Activated CD4-positive, alpha-beta T cell treated with anti-CD3 and anti-CD28 coated beads for 36 hours (primary cell): ENCODE measurements at regions of chr7 and their contacts with region 1.

Region 1: DNA sequence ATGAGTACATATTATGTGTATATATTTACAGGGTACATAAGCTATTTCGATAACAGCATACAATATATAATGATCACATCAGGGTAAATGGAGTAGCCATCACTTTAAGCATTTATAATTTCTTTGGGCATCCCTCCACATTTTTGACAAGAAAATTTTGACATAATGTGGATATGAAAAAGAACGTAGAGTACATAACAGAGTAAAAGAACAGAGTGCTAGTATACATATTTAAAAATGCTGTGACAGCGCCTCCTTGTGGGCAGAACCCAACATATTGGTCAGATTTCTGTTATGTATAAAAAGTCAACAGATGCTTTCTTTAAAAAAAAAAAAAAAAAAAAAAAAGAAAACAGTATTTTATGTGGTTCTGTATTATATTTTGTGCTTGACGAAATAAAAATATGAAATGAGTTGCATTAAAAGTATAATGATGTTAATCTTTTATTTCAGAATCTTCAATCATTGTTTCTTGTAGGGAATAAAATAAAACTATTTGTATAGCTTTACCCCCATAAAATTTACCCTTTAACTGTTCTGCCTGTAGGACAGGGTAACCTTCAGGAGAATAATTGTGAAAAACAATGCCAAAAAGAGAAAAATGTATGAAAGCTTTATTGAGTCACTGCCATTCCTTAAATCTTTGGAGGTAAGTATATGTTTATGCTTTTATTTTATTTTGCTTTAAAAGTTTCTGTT is 18.3 kb upstream of the HBP1 start:
- DNase-seq: peak; percentile 86
- ATAC-seq: peak; percentile 83
- H3K4me3 Mint-ChIP-seq: no peak overlapping the region
- H3K27ac Mint-ChIP-seq: no peak overlapping the region
- H3K4me1 Mint-ChIP-seq: peaks cover 4% of the 10 kb centered on the region
- H3K27me3 Mint-ChIP-seq: no peaks in the 10 kb centered on the region

Region 2: GRCh38 chr7:106542550-106543220 is 607.8 kb before region 1 on chr7:
- CTCF ChIA-PET with region 1: interaction called, 3 read pairs
- POLR2A ChIA-PET with region 1: no interaction called
- intact Hi-C with region 1: loop called in 1 of 2 experiments (anchors 2 kb)
- DNase-seq: peak; percentile 70
- ATAC-seq: peak; percentile 91
- H3K4me3 Mint-ChIP-seq: no peak overlapping the region
- H3K27ac Mint-ChIP-seq: peak overlapping the region; percentile 4
- H3K4me1 Mint-ChIP-seq: peaks cover 8% of the 10 kb centered on the region
- H3K27me3 Mint-ChIP-seq: peaks cover 3% of the 10 kb centered on the region

Region 3: DNA sequence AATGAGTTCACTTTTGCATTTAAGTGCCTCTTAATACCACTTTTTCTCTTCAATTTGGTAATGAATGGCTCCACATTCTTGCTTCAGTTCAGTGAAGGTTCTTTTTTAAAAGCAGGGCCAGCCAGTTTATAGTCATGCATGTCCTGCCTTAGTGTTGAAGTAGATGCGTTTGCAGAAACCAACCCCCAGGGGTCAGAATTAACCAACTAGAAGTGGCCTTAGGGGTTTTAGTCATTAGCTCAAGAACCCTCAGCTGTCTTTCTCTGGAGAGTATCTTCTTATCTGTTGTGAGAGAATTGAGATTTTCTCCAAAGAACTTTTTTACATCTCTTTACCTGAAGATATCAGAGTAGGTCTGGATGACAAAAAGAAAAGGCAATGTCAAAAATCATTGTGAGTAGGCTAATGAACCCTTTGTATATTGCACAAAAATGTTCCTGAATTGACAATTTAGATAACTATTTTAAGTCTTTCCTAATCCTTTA is 203.2 kb before region 1 on chr7:
- CTCF ChIA-PET with region 1: interaction called, 31 read pairs
- POLR2A ChIA-PET with region 1: no interaction called
- intact Hi-C with region 1: loop called (anchors 1 kb)
- DNase-seq: peak; percentile 49
- ATAC-seq: peak; percentile 51
- H3K4me3 Mint-ChIP-seq: no peak overlapping the region
- H3K27ac Mint-ChIP-seq: no peak overlapping the region
- H3K4me1 Mint-ChIP-seq: no peaks in the 10 kb centered on the region
- H3K27me3 Mint-ChIP-seq: no peaks in the 10 kb centered on the region

Region 4: GRCh38 chr7:107138696-107139420 is 11.7 kb before region 1 on chr7:
- CTCF ChIA-PET with region 1: interaction called, 52 read pairs
- POLR2A ChIA-PET with region 1: no interaction called
- intact Hi-C with region 1: no loop called
- DNase-seq: no peak
- ATAC-seq: no peak
- H3K4me3 Mint-ChIP-seq: no peak overlapping the region
- H3K27ac Mint-ChIP-seq: no peak overlapping the region
- H3K4me1 Mint-ChIP-seq: no peaks in the 10 kb centered on the region
- H3K27me3 Mint-ChIP-seq: peaks cover 3% of the 10 kb centered on the region

Region 5: DNA sequence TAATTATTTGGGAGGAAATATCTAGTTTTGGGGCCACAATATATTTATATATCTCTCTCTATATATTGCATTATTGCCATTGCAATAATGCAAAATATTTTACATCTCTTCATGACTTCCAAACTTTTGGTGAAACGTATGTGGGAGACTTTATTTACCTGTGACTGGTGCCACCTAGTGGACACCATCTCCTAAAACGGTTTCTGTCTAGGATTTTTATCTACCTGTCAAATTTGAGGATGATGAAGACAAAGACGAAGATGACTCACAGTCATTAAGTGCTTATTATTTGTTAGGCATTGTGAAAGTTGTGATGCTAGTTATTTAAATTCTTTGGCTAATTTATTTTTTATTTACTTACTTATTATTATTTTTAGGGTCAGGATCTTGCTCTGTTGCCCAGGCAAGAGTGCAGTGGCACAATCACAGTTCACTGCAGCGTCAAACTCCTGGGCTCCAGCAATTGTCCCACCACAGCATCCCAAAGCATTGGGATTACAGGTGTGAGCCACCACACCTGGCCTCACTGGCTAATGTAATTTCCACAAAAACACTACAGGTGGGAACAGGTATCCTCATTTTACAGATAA is 574.7 kb after region 1 on chr7:
- CTCF ChIA-PET with region 1: interaction called, 3 read pairs
- POLR2A ChIA-PET with region 1: no interaction called
- intact Hi-C with region 1: loop called in 1 of 2 experiments (anchors 1 kb)
- DNase-seq: peak; percentile 67
- ATAC-seq: peak; percentile 51
- H3K4me3 Mint-ChIP-seq: no peak overlapping the region
- H3K27ac Mint-ChIP-seq: no peak overlapping the region
- H3K4me1 Mint-ChIP-seq: no peaks in the 10 kb centered on the region
- H3K27me3 Mint-ChIP-seq: peaks cover 20% of the 10 kb centered on the region